GM12878 (cell line): ENCODE measurements at regions of chr2 and their contacts with region 1.

Region 1: DNA sequence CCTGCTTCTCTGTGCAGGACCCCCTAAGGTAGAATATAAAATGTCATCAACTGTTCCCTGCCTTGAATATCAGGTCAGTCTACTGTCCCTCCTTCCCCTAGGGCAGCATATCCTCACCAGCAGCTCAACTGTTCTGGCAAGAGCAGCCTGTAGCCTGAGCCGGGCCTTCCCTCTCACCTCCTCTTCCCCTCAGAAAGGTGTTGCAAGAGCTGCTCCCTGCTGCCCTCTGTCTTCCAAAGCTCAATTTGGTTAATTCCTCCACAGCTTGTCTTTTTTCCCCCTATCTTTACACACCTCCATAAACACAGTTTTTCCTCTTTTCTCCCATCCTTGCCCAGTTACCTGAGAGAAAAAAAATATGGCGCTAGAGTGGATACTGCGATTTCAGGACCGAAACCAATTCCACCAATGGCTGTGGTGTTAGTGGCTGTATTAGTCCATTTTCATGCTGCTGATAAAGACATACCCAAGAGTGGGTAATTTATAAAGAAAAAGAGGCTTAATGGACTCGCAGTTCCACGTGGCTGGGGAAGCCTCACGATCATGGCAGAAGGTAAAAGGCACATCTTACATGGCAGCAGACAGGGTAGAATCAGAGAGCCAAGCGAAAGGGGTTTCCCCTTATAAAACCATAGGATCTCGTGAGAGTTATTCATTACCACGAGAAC is 184.7 kb downstream of the MREG start:
- DNase-seq: no peak
- ATAC-seq: peak; percentile 80
- H3K4me3 ChIP-seq: no peak overlapping the region
- H3K27ac ChIP-seq: no peak overlapping the region
- H3K4me1 ChIP-seq: peaks cover 5% of the 10 kb centered on the region
- H3K27me3 ChIP-seq: no peaks in the 10 kb centered on the region
- CTCF ChIP-seq: peak; percentile 54 to 73 (median 68)
- EP300 ChIP-seq: no peak
- POLR2A ChIP-seq: no peak
- RAD21 ChIP-seq: peak; percentile 80

Region 2: GRCh38 chr2:215793747-215794595 is 34.7 kb before region 1 on chr2:
- CTCF ChIA-PET with region 1: interaction called, 9 read pairs
- POLR2A ChIA-PET with region 1: interaction called, 10 read pairs
- RAD21 ChIA-PET with region 1: interaction called, 6 read pairs
- SMC1A ChIA-PET with region 1: interaction called, 8 read pairs
- in situ Hi-C with region 1: no loop called
- intact Hi-C with region 1: no loop called
- DNase-seq: peak; percentile 56
- ATAC-seq: peak; percentile 67
- H3K4me3 ChIP-seq: no peak overlapping the region
- H3K27ac ChIP-seq: no peak overlapping the region
- H3K4me1 ChIP-seq: peaks cover 5% of the 10 kb centered on the region; the same call in 1 of the 2 replicates
- H3K27me3 ChIP-seq: no peaks in the 10 kb centered on the region
- CTCF ChIP-seq: no peak
- EP300 ChIP-seq: no peak
- POLR2A ChIP-seq: no peak
- RAD21 ChIP-seq: no peak